Heart right ventricle (tissue), 16 donors: ENCODE measurements at regions of chr6 and their contacts with region 1.

Region 1: DNA sequence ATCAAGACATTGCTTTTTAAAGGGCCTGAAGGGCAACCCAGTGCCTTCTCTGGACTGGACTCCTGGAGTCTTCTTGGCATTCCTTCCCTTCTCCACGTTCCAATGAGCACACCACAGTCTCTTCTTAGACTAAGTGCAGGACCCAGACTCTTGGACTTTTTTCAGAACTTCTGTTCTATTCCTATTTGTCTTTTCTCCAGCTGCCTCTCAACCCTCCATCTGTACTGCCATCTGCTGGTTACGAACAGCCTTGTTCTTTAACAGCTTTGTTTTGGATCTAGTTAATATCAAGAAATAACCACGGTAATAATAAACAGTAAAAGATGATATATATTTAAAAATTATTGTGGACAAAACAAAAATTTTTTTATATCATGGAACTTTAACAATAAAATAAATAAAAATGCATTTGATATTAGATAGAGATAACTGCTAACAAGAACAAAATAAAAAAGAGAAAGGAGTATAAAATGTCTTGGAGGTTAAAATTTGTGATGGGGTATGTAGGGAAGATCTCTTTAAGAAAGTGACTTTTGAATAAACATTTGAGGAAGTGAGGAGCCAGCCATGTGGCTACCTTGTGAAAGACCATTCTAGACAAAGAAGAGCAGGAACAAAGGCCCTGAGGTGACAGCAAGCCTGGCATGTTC is 105.1 kb upstream of the HCRTR2 start:
- DNase-seq: peak in 1 of 2 donors; percentile 11
- ATAC-seq: peak in 1 of 8 donors; percentile 41
- H3K4me3 ChIP-seq: no peak overlapping the region
- H3K27ac ChIP-seq: no peak overlapping the region
- H3K4me1 ChIP-seq: peaks cover 0 to 7% (median 0%) of the 10 kb centered on the region in 9 donors
- H3K27me3 ChIP-seq: no peaks in the 10 kb centered on the region
- CTCF ChIP-seq: peak; percentile 20 to 65 (median 59)

Region 2: DNA sequence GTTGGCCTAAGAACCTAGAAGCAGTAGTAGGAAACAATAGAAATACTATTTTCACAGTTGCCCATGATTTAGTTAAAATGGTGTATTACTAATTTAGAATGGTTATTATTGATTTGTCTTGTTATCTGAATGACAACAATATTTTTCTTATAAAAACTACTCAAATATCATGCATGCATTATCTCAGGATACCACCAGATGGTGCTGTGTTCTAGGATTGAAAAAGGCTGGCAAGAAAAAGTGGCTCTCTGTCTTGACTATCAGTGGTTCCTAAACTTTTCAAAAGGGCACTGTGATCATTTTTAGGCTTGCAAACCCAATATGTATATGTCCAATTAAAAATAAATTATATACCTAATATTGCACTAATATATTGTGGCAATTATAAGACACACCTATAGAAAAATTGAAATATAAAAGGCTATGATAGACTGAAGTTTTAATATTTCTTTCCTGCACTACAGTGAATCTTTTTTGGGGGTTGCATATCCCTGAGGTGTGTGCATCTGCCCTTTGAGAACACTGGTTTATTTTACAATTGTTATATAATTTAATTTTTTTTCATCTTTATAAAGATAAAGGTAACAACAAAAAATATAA is 1089.7 kb before region 1 on chr6:
- intact Hi-C with region 1: loop called in 7 of 10 experiments (anchors 5 to 10 kb)
- DNase-seq: no peak
- ATAC-seq: no peak
- H3K4me3 ChIP-seq: no peak overlapping the region
- H3K27ac ChIP-seq: no peak overlapping the region
- H3K4me1 ChIP-seq: peaks cover 0 to 12% (median under 1%) of the 10 kb centered on the region in 9 donors
- H3K27me3 ChIP-seq: no peaks in the 10 kb centered on the region
- CTCF ChIP-seq: peak; percentile 60 to 91 (median 86)

Region 3: GRCh38 chr6:54717849-54718455 is 351.3 kb before region 1 on chr6:
- intact Hi-C with region 1: loop called in 9 of 10 experiments (anchors 2 to 10 kb)
- DNase-seq: peak in 1 of 2 donors; percentile 52
- ATAC-seq: peak in 3 of 8 donors; percentile 42 to 56 (median 53)
- H3K4me3 ChIP-seq: no peak overlapping the region
- H3K27ac ChIP-seq: no peak overlapping the region
- H3K4me1 ChIP-seq: no peaks in the 10 kb centered on the region
- H3K27me3 ChIP-seq: no peaks in the 10 kb centered on the region
- CTCF ChIP-seq: peak; percentile 58 to 87 (median 77)

Region 4: DNA sequence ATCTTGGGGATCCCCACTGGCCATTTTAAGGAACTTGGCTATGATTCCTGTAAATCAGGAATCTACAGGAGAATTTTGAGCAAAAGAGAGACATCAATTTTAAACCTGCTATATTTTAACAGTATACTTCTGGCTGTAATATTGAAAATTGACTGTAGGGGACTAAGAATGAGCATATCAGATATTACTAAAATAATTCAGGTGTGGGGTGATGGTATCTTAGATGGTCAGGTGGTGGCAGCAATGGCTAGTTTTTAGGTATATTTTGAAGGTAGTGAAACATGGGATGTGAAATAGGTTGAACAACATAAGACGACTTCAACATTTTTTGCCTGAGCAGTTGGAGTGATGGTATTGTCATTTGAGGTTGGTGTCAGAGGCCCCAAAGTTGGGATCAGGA is 190.6 kb before region 1 on chr6:
- intact Hi-C with region 1: loop called in 2 of 10 experiments (anchors 10 kb)
- DNase-seq: no peak
- ATAC-seq: no peak
- H3K4me3 ChIP-seq: no peak overlapping the region
- H3K27ac ChIP-seq: no peak overlapping the region
- H3K4me1 ChIP-seq: no peaks in the 10 kb centered on the region
- H3K27me3 ChIP-seq: no peaks in the 10 kb centered on the region
- CTCF ChIP-seq: no peak

Region 5: GRCh38 chr6:54892831-54893230 is 176.4 kb before region 1 on chr6:
- intact Hi-C with region 1: no loop called
- DNase-seq: no peak
- ATAC-seq: no peak
- H3K4me3 ChIP-seq: no peak overlapping the region
- H3K27ac ChIP-seq: no peak overlapping the region
- H3K4me1 ChIP-seq: no peaks in the 10 kb centered on the region
- H3K27me3 ChIP-seq: no peaks in the 10 kb centered on the region
- CTCF ChIP-seq: no peak

Region 6: GRCh38 chr6:55014321-55015088 is 54.8 kb before region 1 on chr6:
- intact Hi-C with region 1: loop called in 1 of 10 experiments (anchors 5 kb)
- DNase-seq: no peak
- ATAC-seq: peak in 1 of 8 donors; percentile 41
- H3K4me3 ChIP-seq: no peak overlapping the region
- H3K27ac ChIP-seq: no peak overlapping the region
- H3K4me1 ChIP-seq: peaks cover 0 to 7% (median 0%) of the 10 kb centered on the region in 9 donors
- H3K27me3 ChIP-seq: no peaks in the 10 kb centered on the region
- CTCF ChIP-seq: no peak

Region 7: GRCh38 chr6:55047451-55048044 is 21.7 kb before region 1 on chr6:
- intact Hi-C with region 1: no loop called
- DNase-seq: no peak
- ATAC-seq: no peak
- H3K4me3 ChIP-seq: no peak overlapping the region
- H3K27ac ChIP-seq: no peak overlapping the region
- H3K4me1 ChIP-seq: peaks cover 0 to 19% (median 9%) of the 10 kb centered on the region in 9 donors
- H3K27me3 ChIP-seq: no peaks in the 10 kb centered on the region
- CTCF ChIP-seq: no peak